SK-N-SH (cell line): ENCODE measurements at regions of chr2 and their contacts with region 1.

Region 1: GRCh38 chr2:2846332-2847208 is 515.5 kb upstream of the MYT1L start:
- DNase-seq: peak; percentile 81
- H3K4me3 ChIP-seq: no peak overlapping the region; a peak in 1 of 4 replicates
- H3K27ac ChIP-seq: peak overlapping the region; percentile 30 to 85; a peak in 3 of 4 replicates
- H3K4me1 ChIP-seq: peaks cover 0 to 70% of the 10 kb centered on the region in 2 experiments; a peak in 2 of 4 replicates
- H3K27me3 ChIP-seq: no peaks in the 10 kb centered on the region
- CTCF ChIP-seq: no peak
- EP300 ChIP-seq: peak in 1 of 2 experiments; percentile 81; a peak in 2 of 4 replicates
- RAD21 ChIP-seq: peak; percentile 44

Region 2: DNA sequence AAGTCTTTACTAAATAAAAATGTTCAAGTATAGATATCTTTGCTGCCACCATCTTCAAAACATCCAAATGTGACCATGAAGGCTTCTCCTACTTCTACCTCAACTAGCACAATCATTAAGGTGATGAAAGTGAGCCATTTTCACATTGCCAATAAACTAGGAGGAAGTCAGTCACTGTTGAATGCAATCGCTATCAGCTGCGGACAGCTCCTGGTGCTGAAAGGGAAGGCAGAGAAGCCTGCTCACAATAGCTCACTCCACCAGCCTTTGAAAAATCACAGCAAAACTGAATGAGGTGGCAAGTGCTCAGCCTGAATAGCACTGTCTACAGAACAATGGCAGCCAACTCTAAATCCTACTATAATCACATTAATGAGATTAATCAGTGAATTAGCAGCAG is 517.7 kb before region 1 on chr2:
- CTCF ChIA-PET with region 1: interaction called, 9 read pairs
- POLR2A ChIA-PET with region 1: interaction called, 42 read pairs
- DNase-seq: no peak
- H3K4me3 ChIP-seq: peak overlapping the region in 1 of 2 experiments; percentile 37; a peak in 2 of 4 replicates
- H3K27ac ChIP-seq: peak overlapping the region in 1 of 2 experiments; percentile 100; a peak in 2 of 4 replicates
- H3K4me1 ChIP-seq: peaks cover 0 to 27% of the 10 kb centered on the region in 2 experiments; a peak in 2 of 4 replicates
- H3K27me3 ChIP-seq: no peaks in the 10 kb centered on the region
- CTCF ChIP-seq: no peak
- EP300 ChIP-seq: no peak; a peak in 1 of 4 replicates
- RAD21 ChIP-seq: no peak

Region 3: DNA sequence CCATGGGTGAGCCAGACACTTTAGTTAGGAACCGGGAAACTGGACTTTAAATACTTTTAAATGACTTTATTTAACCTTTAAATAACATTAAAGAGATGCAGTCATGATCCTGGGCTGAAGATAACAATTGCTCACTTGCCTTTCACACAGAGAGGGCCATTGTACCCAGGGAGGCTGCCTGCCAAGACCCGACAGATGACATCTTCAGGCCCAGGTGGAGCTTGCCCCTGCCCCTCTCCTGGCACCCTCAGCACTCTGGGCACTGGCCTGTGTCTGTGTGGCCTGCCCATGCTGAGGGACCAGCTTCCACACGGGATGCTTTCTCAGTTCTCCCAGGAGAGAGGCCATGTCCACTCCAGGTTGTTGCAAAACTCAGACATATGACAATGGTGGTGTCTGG is 299.1 kb before region 1 on chr2:
- CTCF ChIA-PET with region 1: no interaction called
- POLR2A ChIA-PET with region 1: no interaction called
- DNase-seq: no peak
- H3K4me3 ChIP-seq: no peak overlapping the region
- H3K27ac ChIP-seq: no peak overlapping the region
- H3K4me1 ChIP-seq: peaks cover 0 to 8% of the 10 kb centered on the region in 2 experiments; a peak in 1 of 4 replicates
- H3K27me3 ChIP-seq: no peaks in the 10 kb centered on the region
- CTCF ChIP-seq: no peak
- EP300 ChIP-seq: no peak
- RAD21 ChIP-seq: no peak

Region 4: GRCh38 chr2:2646433-2647051 is 200.0 kb before region 1 on chr2:
- CTCF ChIA-PET with region 1: no interaction called
- POLR2A ChIA-PET with region 1: no interaction called
- DNase-seq: peak; percentile 17
- H3K4me3 ChIP-seq: no peak overlapping the region
- H3K27ac ChIP-seq: no peak overlapping the region
- H3K4me1 ChIP-seq: no peaks in the 10 kb centered on the region; a peak in 1 of 4 replicates
- H3K27me3 ChIP-seq: no peaks in the 10 kb centered on the region
- CTCF ChIP-seq: no peak
- EP300 ChIP-seq: no peak
- RAD21 ChIP-seq: no peak

Region 5: GRCh38 chr2:2899826-2900225 is 53.3 kb after region 1 on chr2:
- CTCF ChIA-PET with region 1: interaction called, 6 read pairs
- POLR2A ChIA-PET with region 1: interaction called, 11 read pairs
- DNase-seq: peak; percentile 79
- H3K4me3 ChIP-seq: no peak overlapping the region
- H3K27ac ChIP-seq: peak overlapping the region in 1 of 2 experiments; percentile 85; a peak in 2 of 4 replicates
- H3K4me1 ChIP-seq: peaks cover 0 to 46% of the 10 kb centered on the region in 2 experiments; a peak in 2 of 4 replicates
- H3K27me3 ChIP-seq: no peaks in the 10 kb centered on the region
- CTCF ChIP-seq: no peak
- EP300 ChIP-seq: peak in 1 of 2 experiments; percentile 88; a peak in 2 of 4 replicates
- RAD21 ChIP-seq: peak; percentile 15; the same call in 1 of the 2 replicates

Region 6: DNA sequence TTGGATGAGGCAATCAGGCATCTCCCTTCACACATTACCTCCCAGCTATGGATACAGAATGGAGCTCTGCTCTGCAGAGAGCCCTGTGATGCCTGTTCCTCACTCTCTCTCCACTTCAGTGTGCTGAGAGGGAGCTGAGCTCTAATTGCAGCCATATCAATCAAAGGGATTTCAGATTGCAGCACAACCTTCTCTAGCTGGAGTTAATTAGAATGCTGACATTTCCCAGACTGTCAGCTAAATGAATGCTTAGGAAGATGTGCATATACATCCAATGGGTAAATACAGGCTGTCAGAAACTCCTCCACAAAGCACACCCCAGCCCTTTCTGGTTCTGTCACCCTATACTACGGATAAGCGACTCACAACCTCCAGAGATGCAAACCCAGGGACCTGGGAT is 128.4 kb after region 1 on chr2:
- CTCF ChIA-PET with region 1: interaction called, 5 read pairs
- POLR2A ChIA-PET with region 1: interaction called, 11 read pairs
- DNase-seq: peak; percentile 81
- H3K4me3 ChIP-seq: no peak overlapping the region
- H3K27ac ChIP-seq: peak overlapping the region in 1 of 2 experiments; percentile 96; a peak in 2 of 4 replicates
- H3K4me1 ChIP-seq: peaks cover 0 to 24% of the 10 kb centered on the region in 2 experiments; a peak in 2 of 4 replicates
- H3K27me3 ChIP-seq: no peaks in the 10 kb centered on the region
- CTCF ChIP-seq: no peak
- EP300 ChIP-seq: peak in 1 of 2 experiments; percentile 92; a peak in 2 of 4 replicates
- RAD21 ChIP-seq: peak; percentile 49

Region 7: GRCh38 chr2:3102915-3103569 is 256.5 kb after region 1 on chr2:
- CTCF ChIA-PET with region 1: interaction called, 3 read pairs
- POLR2A ChIA-PET with region 1: interaction called, 37 read pairs
- DNase-seq: no peak
- H3K4me3 ChIP-seq: no peak overlapping the region
- H3K27ac ChIP-seq: peak overlapping the region in 1 of 2 experiments; percentile 100; a peak in 2 of 4 replicates
- H3K4me1 ChIP-seq: peaks cover 0 to 77% of the 10 kb centered on the region in 2 experiments; a peak in 2 of 4 replicates
- H3K27me3 ChIP-seq: no peaks in the 10 kb centered on the region
- CTCF ChIP-seq: no peak
- EP300 ChIP-seq: no peak
- RAD21 ChIP-seq: no peak